ENCODE measurements at regions of chr1 and their contacts with region 1.

Region 1: GRCh38 chr1:204814181-204814884 is 56.3 kb upstream of the NFASC start:
- DNase-seq: peak; percentile 43 to 53
- ATAC-seq: peak; percentile 75 to 97 (median 92)
- H3K4me3 ChIP-seq: no peak overlapping the region
- H3K27ac ChIP-seq: peak overlapping the region; percentile 46 to 75 (median 62)
- H3K4me1 ChIP-seq: peaks cover 0 to 41% (median 20%) of the 10 kb centered on the region in 9 donors
- H3K27me3 ChIP-seq: no peaks in the 10 kb centered on the region
- CTCF ChIP-seq: peak in 3 of 9 donors; percentile 28 to 37 (median 29)

Region 2: GRCh38 chr1:204872262-204872881 is 58.0 kb after region 1 on chr1:
- intact Hi-C with region 1: no loop called
- DNase-seq: peak in 1 of 2 donors; percentile 25
- ATAC-seq: peak in 7 of 8 donors; percentile 36 to 80 (median 50)
- H3K4me3 ChIP-seq: peak overlapping the region in 1 of 10 donors; percentile 3
- H3K27ac ChIP-seq: peak overlapping the region in 6 of 10 donors; percentile 2 to 68 (median 50)
- H3K4me1 ChIP-seq: peaks cover 0 to 55% (median 20%) of the 10 kb centered on the region in 9 donors
- H3K27me3 ChIP-seq: peaks cover 0 to 11% (median 0%) of the 10 kb centered on the region in 7 donors
- CTCF ChIP-seq: no peak

Region 3: DNA sequence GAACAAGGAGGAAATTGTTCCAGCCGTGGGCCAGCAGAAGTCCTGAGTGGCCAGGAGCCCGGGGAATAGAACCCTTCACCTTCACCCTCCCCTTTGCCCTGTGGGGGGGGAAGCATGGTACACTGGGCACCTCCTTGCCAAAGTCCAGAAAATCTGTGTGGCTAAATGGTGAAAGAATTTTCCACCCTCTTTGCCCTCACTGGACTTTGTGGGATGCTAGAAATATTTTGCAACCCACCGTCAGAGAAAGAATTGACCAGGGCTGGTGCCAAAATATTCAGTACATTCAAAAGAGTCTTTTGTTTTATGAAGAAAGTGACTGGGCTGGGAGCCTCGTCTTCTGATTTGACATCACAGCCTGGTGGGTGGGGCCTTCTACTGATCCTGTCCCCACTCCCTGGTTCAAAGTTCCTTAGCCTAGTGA is 71.0 kb after region 1 on chr1:
- intact Hi-C with region 1: loop called in 1 of 10 experiments (anchors 5 kb)
- DNase-seq: peak in 1 of 2 donors; percentile 25
- ATAC-seq: peak in 5 of 8 donors; percentile 32 to 56 (median 36)
- H3K4me3 ChIP-seq: no peak overlapping the region
- H3K27ac ChIP-seq: peak overlapping the region in 8 of 10 donors; percentile 11 to 61 (median 37)
- H3K4me1 ChIP-seq: peaks cover 5 to 70% (median 26%) of the 10 kb centered on the region in 9 donors
- H3K27me3 ChIP-seq: peaks cover 0 to 13% (median 7%) of the 10 kb centered on the region in 7 donors
- CTCF ChIP-seq: no peak

Region 4: GRCh38 chr1:204961765-204962419 is 147.6 kb after region 1 on chr1:
- intact Hi-C with region 1: loop called in 2 of 10 experiments (anchors 1 to 5 kb)
- DNase-seq: peak in 1 of 2 donors; percentile 42
- ATAC-seq: peak in 2 of 8 donors; percentile 25 to 39
- H3K4me3 ChIP-seq: no peak overlapping the region
- H3K27ac ChIP-seq: no peak overlapping the region
- H3K4me1 ChIP-seq: peaks cover 0 to 37% (median 20%) of the 10 kb centered on the region in 9 donors
- H3K27me3 ChIP-seq: no peaks in the 10 kb centered on the region
- CTCF ChIP-seq: peak in 1 of 9 donors; percentile 15

Region 5: DNA sequence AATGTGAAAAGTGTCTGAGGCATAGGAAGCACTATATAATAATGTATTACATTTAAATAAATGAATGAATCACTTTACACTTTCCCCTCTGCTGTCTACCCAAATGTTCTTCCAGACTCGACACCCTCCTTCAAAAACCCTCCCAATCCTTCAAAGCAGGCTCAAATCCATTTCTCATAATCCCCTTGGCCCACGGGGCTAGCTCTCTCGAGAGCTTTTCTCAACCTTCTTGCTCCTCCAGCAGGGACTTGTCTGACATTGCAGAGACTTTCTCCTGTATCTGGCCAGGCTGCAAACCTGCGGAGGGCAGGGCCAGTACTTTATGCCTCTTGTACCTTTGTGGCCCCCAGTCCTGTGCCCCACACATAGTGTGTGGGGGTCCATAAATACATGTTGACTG is 214.6 kb after region 1 on chr1:
- intact Hi-C with region 1: no loop called
- DNase-seq: no peak
- ATAC-seq: no peak
- H3K4me3 ChIP-seq: no peak overlapping the region
- H3K27ac ChIP-seq: no peak overlapping the region
- H3K4me1 ChIP-seq: no peaks in the 10 kb centered on the region
- H3K27me3 ChIP-seq: peaks cover 0 to 28% (median 18%) of the 10 kb centered on the region in 7 donors
- CTCF ChIP-seq: no peak